H1 (cell line): ENCODE measurements at regions of chr3 and their contacts with region 1.

Region 1: DNA sequence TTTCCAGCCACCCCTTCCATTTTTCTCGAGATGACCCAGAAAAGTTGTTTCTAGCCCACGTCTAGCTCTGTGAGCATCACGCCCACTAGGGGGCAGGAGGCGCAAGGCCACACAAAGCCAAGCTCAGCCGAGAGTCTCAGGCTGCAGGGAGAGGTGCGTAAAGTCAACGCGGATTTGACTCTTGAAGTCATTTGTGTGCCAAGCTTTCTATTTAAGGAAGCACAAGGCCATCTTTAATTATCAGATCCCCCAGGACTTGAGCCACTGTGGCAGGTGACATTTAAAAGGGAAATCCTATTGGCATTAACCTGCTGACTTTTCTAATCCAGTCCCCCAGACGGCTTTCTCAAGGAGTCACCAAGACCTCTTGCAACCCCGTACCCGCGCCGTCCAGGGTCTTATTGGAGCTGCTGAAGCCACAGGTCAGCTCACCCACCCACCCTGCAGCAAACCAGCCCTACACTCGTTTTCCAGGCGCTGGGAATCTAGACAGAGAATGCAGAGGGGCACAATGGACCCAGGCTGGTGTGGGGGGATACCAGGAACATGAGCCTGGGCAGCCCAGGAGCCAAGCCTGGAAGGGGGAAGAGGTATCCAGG is 62.1 kb downstream of the CAPN7 start:
- DNase-seq: peak; percentile 53 to 87
- H3K4me3 ChIP-seq: no peak overlapping the region
- H3K27ac ChIP-seq: no peak overlapping the region
- H3K4me1 ChIP-seq: no peaks in the 10 kb centered on the region; a peak in 1 of 7 replicates
- H3K27me3 ChIP-seq: no peaks in the 10 kb centered on the region
- CTCF ChIP-seq: peak; percentile 94 to 98 (median 96)
- EP300 ChIP-seq: no peak
- POLR2A ChIP-seq: no peak
- RAD21 ChIP-seq: peak; percentile 98 to 99

Region 2: GRCh38 chr3:14847613-14848541 is 420.3 kb before region 1 on chr3:
- CTCF ChIA-PET with region 1: no interaction called
- POLR2A ChIA-PET with region 1: no interaction called
- DNase-seq: peak; percentile 38 to 66
- H3K4me3 ChIP-seq: peak overlapping the region in 1 of 4 experiments; percentile 11; a peak in 1 of 8 replicates
- H3K27ac ChIP-seq: 0 out of 2 replicates have a peak overlapping the region, but pooled peaks have one; percentile 12
- H3K4me1 ChIP-seq: peaks cover 14 to 35% (median 22%) of the 10 kb centered on the region in 4 experiments
- H3K27me3 ChIP-seq: no peaks in the 10 kb centered on the region
- CTCF ChIP-seq: no peak
- EP300 ChIP-seq: peak in 1 of 2 experiments; percentile 62; a peak in 1 of 3 replicates
- POLR2A ChIP-seq: peak in 1 of 2 experiments; percentile 22; a peak in 1 of 3 replicates
- RAD21 ChIP-seq: peak in 1 of 2 experiments; percentile 17; a peak in 1 of 4 replicates

Region 3: DNA sequence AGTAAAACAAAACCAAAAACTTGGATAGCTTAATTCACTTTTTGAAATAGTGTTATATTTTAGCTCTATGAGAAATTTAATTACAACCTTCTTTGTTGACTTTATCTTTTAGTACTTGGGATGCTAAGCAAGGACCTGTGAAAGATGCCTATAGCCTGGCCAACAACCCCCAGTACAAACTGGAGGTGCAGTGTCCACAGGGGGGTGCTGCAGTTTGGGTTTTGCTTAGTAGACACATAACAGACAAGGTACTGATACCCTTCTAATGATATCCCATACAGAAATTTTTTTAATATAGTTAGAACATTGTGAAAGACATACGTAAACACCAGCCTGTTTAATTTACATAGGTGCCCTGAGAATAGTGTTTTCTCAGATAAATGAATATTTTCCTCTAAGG is 26.8 kb before region 1 on chr3:
- CTCF ChIA-PET with region 1: interaction called, 12 read pairs
- POLR2A ChIA-PET with region 1: no interaction called
- DNase-seq: no peak
- H3K4me3 ChIP-seq: no peak overlapping the region
- H3K27ac ChIP-seq: no peak overlapping the region
- H3K4me1 ChIP-seq: no peaks in the 10 kb centered on the region
- H3K27me3 ChIP-seq: no peaks in the 10 kb centered on the region
- CTCF ChIP-seq: peak; percentile 39 to 49 (median 45)
- EP300 ChIP-seq: no peak
- POLR2A ChIP-seq: no peak
- RAD21 ChIP-seq: peak; percentile 54 to 68

Region 4: GRCh38 chr3:15300323-15301078 is 32.4 kb after region 1 on chr3:
- CTCF ChIA-PET with region 1: interaction called, 19 read pairs
- POLR2A ChIA-PET with region 1: no interaction called
- DNase-seq: no peak
- H3K4me3 ChIP-seq: no peak overlapping the region
- H3K27ac ChIP-seq: no peak overlapping the region
- H3K4me1 ChIP-seq: no peaks in the 10 kb centered on the region
- H3K27me3 ChIP-seq: no peaks in the 10 kb centered on the region
- CTCF ChIP-seq: no peak
- EP300 ChIP-seq: no peak
- POLR2A ChIP-seq: no peak
- RAD21 ChIP-seq: no peak

Region 5: DNA sequence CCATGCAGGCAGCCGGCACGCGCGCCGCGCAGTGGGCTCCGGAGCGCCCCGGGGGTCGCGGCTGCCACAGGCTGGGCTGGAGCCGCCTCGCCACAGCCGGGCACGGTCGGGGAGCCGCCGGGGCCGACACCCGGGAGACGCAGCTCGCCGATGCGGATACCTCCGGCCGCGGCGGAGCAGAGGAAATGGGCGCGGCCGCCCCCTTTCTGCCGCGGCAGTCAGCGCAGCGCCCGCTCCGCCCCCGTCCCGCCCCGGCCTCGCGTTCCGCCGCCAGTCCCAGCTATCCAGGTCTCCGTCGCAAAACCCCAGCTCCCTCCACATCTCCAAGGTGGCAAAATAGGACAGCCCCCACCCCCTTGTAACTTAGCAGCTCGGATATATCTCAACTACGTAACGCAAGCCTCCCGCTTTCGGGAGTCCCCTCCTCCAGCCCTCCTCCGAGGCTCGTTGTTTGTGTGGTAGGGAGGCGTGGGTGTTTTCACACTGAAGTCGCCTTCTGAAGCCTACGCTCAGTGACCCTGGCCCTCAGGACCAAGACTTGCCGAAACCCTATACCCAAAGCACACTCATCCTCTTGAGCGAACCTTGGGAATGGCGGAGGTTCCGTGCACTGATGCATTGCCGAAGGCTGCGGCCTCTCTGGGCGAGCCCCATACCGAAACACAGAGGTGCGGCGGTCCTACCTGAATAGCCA is 64.4 kb after region 1 on chr3 and contains the start of gene SH3BP5:
- CTCF ChIA-PET with region 1: interaction called, 85 read pairs
- POLR2A ChIA-PET with region 1: interaction called, 3 read pairs
- DNase-seq: peak in 1 of 2 experiments; percentile 87
- H3K4me3 ChIP-seq: peak within 1 kb of the TSS; percentile 65 to 92 (median 84)
- H3K27ac ChIP-seq: no peak within 1 kb of the TSS; the same call in 1 of the 2 replicates
- H3K4me1 ChIP-seq: peaks cover 0 to 11% (median 9%) of the 10 kb centered on the region in 4 experiments; a peak in 6 of 7 replicates
- H3K27me3 ChIP-seq: peaks cover 1 to 20% (median 10%) of the 10 kb centered on the region in 4 experiments; a peak in 6 of 7 replicates
- CTCF ChIP-seq: peak; percentile 57 to 72 (median 63)
- EP300 ChIP-seq: no peak
- POLR2A ChIP-seq: no peak
- RAD21 ChIP-seq: peak; percentile 37 to 51
- total RNA-seq, gene SH3BP5: 9.4 and 9.7 TPM in 2 replicates

Region 6: DNA sequence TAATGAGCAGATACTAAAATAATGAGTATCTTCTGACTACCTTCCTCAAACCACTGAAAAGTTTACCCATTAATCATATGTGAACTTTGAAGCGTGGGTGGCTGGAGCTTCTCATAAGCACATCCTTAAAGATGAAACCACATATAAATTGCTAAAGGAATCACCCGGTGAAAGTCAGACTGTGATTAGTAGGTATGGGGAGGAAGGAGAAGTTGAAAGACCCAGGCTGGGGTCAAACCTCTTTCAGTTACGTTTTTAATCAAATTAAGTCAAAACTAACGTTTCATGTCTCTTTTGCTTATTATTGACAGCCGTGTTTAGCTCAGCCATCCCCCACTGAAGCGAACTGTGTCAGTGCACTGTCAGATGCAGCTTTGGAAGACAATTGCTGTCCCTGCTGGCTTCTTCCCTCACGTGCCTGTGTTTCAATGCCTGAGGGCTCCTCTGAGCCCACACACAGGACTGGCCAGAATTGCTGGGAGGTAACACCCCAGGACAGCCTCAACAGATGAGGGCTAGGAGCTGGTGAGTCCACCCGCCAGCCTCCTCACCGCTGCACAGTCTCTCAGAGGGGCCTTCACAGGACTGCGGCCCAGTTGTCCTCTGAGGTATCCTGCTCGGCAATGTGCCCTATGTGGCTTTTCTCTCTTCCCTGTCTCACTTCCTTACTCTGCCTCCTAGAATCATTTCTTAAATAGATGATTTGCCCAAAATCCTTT is 93.5 kb after region 1 on chr3:
- CTCF ChIA-PET with region 1: interaction called, 24 read pairs
- POLR2A ChIA-PET with region 1: no interaction called
- DNase-seq: no peak
- H3K4me3 ChIP-seq: no peak overlapping the region
- H3K27ac ChIP-seq: no peak overlapping the region
- H3K4me1 ChIP-seq: peaks cover 0 to 10% (median 4%) of the 10 kb centered on the region in 4 experiments; a peak in 5 of 7 replicates
- H3K27me3 ChIP-seq: peaks cover 0 to 1% (median 0%) of the 10 kb centered on the region in 4 experiments; a peak in 2 of 7 replicates
- CTCF ChIP-seq: no peak
- EP300 ChIP-seq: no peak
- POLR2A ChIP-seq: no peak
- RAD21 ChIP-seq: no peak

Region 7: DNA sequence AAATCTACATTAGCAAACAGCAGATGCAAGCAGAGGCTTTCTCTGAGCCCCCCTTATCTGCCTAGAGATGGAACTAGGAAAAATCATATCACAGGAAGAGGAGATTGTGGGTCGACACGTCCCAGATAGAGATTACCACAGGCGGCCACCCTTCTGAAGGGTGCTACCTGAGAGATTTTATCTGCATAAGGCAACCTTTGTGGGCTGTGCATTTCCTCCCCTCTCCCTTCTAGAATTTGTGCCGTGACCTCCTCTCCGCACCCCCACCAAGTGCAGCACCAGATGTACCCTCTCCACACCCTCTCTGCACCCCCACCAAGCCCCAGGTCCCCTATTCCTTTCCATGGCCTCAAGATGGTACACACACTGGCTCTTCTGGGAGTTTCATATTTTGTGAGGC is 131.8 kb after region 1 on chr3:
- CTCF ChIA-PET with region 1: interaction called, 227 read pairs
- POLR2A ChIA-PET with region 1: interaction called, 5 read pairs
- DNase-seq: no peak
- H3K4me3 ChIP-seq: no peak overlapping the region
- H3K27ac ChIP-seq: no peak overlapping the region
- H3K4me1 ChIP-seq: no peaks in the 10 kb centered on the region
- H3K27me3 ChIP-seq: no peaks in the 10 kb centered on the region
- CTCF ChIP-seq: no peak
- EP300 ChIP-seq: no peak
- POLR2A ChIP-seq: no peak
- RAD21 ChIP-seq: no peak